Pancreas (tissue), 10 donors: ENCODE measurements at regions of chr22 and their contacts with region 1.

Region 1: GRCh38 chr22:25057013-25057881 is 104.7 kb downstream of the KIAA1671 start:
- DNase-seq: peak; percentile 30 to 94 (median 69)
- ATAC-seq: peak; percentile 65 to 94 (median 92)
- H3K4me3 ChIP-seq: no peak overlapping the region
- H3K27ac ChIP-seq: no peak overlapping the region
- H3K4me1 ChIP-seq: peaks cover 0 to 9% (median 3%) of the 10 kb centered on the region in 3 donors
- H3K27me3 ChIP-seq: no peaks in the 10 kb centered on the region
- CTCF ChIP-seq: peak; percentile 51 to 86 (median 82)

Region 2: GRCh38 chr22:24938741-24939341 is 118.4 kb before region 1 on chr22:
- intact Hi-C with region 1: loop called in 1 of 3 experiments (anchors 10 kb)
- DNase-seq: peak in 2 of 6 donors; percentile 41 to 50
- ATAC-seq: peak in 3 of 4 donors; percentile 44 to 45 (median 45)
- H3K4me3 ChIP-seq: no peak overlapping the region
- H3K27ac ChIP-seq: no peak overlapping the region
- H3K4me1 ChIP-seq: peaks cover 6 to 19% (median 16%) of the 10 kb centered on the region in 3 donors
- H3K27me3 ChIP-seq: no peaks in the 10 kb centered on the region
- CTCF ChIP-seq: peak; percentile 53 to 71 (median 64)

Region 3: DNA sequence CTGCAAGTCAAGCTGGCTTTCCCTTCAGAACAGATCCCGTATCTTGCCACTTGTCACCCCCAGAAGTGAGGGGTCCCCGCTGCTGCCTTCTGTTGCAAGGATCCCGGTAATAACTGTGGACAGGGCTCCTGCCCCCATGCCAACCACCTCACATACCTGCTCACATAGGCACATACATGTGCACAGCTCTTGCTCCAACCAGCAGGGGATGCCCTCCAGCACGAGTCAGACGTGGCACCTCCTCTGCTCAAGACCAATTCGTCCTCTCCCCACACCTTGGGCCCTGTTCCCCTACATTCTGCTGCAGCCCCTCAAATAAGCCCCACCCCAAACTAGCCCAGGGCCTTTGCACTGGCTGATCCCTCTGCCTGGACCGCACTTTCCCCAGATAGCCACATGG is 325.5 kb after region 1 on chr22:
- intact Hi-C with region 1: no loop called
- DNase-seq: no peak
- ATAC-seq: peak in 2 of 4 donors; percentile 36 to 57
- H3K4me3 ChIP-seq: no peak overlapping the region
- H3K27ac ChIP-seq: no peak overlapping the region
- H3K4me1 ChIP-seq: no peaks in the 10 kb centered on the region
- H3K27me3 ChIP-seq: no peaks in the 10 kb centered on the region
- CTCF ChIP-seq: no peak

Region 4: GRCh38 chr22:26109686-26110315 is 1052.6 kb after region 1 on chr22:
- intact Hi-C with region 1: no loop called
- DNase-seq: no peak
- ATAC-seq: no peak
- H3K4me3 ChIP-seq: no peak overlapping the region
- H3K27ac ChIP-seq: no peak overlapping the region
- H3K4me1 ChIP-seq: no peaks in the 10 kb centered on the region
- H3K27me3 ChIP-seq: no peaks in the 10 kb centered on the region
- CTCF ChIP-seq: no peak